ENCODE measurements at regions of chr10 and their contacts with region 1.

Region 1: GRCh38 chr10:70799124-70799523 is 13.9 kb upstream of the TBATA start:
- DNase-seq: peak in 2 of 3 donors; percentile 48 to 50
- H3K4me3 ChIP-seq: no peak overlapping the region
- H3K27ac ChIP-seq: no peak overlapping the region
- H3K4me1 ChIP-seq: peaks cover 0 to 8% (median 2%) of the 10 kb centered on the region in 4 experiments
- H3K27me3 ChIP-seq: no peaks in the 10 kb centered on the region

Region 2: GRCh38 chr10:70162892-70163201 is 636.3 kb before region 1 on chr10:
- CTCF ChIA-PET with region 1: no interaction called
- POLR2A ChIA-PET with region 1: no interaction called
- DNase-seq: peak in 2 of 3 donors; percentile 47 to 49
- H3K4me3 ChIP-seq: no peak overlapping the region
- H3K27ac ChIP-seq: no peak overlapping the region
- H3K4me1 ChIP-seq: peaks cover 0 to 18% (median 13%) of the 10 kb centered on the region in 4 experiments
- H3K27me3 ChIP-seq: peaks cover 0 to 2% (median 0%) of the 10 kb centered on the region in 5 experiments

Region 3: GRCh38 chr10:70753841-70754621 is 45.1 kb before region 1 on chr10:
- CTCF ChIA-PET with region 1: no interaction called
- POLR2A ChIA-PET with region 1: no interaction called
- DNase-seq: no peak
- H3K4me3 ChIP-seq: no peak overlapping the region
- H3K27ac ChIP-seq: no peak overlapping the region
- H3K4me1 ChIP-seq: peaks cover 0 to 3% (median 1%) of the 10 kb centered on the region in 4 experiments
- H3K27me3 ChIP-seq: no peaks in the 10 kb centered on the region

Region 4: GRCh38 chr10:70815504-70816219 is 16.5 kb after region 1 on chr10 and contains the start of gene SGPL1:
- CTCF ChIA-PET with region 1: interaction called, 10 read pairs
- POLR2A ChIA-PET with region 1: no interaction called
- DNase-seq: peak; percentile 66 to 82 (median 77)
- H3K4me3 ChIP-seq: peak within 1 kb of the TSS; percentile 63 to 92 (median 82)
- H3K27ac ChIP-seq: peak within 1 kb of the TSS in 1 of 2 experiments; percentile 56
- H3K4me1 ChIP-seq: peaks cover 0 to 13% (median 3%) of the 10 kb centered on the region in 4 experiments
- H3K27me3 ChIP-seq: no peaks in the 10 kb centered on the region

Region 5: DNA sequence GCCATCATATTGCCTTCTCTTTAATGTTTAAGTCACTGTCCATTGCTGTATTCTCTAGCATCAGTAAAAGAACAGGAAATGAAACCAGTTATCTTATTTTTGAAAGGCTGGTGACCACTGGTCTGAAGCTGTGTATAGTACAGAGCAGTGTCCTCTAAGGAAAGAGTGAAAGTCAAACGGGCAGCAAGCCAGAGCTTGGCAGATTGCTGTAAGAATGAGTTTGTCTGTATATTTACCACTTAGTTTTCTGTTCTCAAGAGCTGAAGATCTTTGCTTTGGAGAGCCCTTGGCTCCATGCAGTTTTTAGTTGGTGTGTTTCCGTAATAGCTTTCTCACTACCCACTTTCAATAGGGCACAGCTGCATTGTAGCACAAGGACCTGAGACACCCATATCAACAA is 57.3 kb after region 1 on chr10:
- CTCF ChIA-PET with region 1: no interaction called
- POLR2A ChIA-PET with region 1: no interaction called
- DNase-seq: no peak
- H3K4me3 ChIP-seq: no peak overlapping the region
- H3K27ac ChIP-seq: no peak overlapping the region
- H3K4me1 ChIP-seq: no peaks in the 10 kb centered on the region
- H3K27me3 ChIP-seq: no peaks in the 10 kb centered on the region

Measured in common myeloid progenitor, CD34-positive (primary cell).